RWPE1 (cell line): ENCODE measurements at regions of chr17 and their contacts with region 1.

Region 1: GRCh38 chr17:68924786-68925720 is 30.1 kb downstream of the ABCA8 start:
- DNase-seq: no peak
- H3K27ac ChIP-seq: no peak overlapping the region
- CTCF ChIP-seq: no peak

Region 2: DNA sequence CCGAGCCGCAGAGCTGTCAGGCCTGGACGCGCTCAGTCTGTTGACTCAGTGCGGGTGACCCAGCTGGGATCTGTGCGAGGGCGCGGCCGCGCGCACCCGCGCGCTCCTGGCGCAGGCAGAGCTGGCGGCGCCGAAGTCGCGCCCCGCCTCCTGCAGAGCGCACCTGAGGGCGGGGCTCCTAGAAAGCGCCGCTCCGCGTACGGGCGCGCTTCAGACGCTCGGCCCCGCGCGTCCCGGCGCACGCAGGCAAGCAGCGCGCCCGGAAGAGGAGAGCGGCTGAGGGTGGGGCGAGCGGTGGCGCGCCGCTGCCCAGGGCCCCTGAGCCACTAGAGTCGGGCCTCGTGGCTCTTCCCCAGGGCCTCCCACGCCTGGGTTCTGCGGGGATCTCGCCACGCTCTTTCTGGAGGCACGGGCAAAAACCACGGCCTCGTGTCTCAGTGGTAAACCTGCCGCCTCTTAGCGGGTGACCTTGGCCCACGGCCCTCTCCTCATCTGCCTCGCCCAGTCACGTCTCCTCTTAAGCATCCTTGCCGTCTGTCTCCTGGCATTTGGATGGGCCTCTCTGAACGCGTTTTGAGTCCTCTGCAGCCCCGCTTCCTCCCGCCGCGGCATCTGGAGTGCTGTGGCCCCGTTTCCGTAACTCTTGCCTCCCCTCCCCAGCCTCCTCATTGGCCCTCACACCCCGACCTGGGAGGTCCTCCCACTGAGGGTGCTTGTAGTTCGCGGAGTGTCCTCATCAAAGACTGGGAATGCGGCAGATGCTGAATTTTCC is 402.2 kb after region 1 on chr17 and contains the start of gene ABCA5:
- CTCF ChIA-PET with region 1: interaction called, 10 read pairs
- POLR2A ChIA-PET with region 1: no interaction called
- DNase-seq: peak; percentile 93
- H3K27ac ChIP-seq: peak within 1 kb of the TSS; percentile 88
- CTCF ChIP-seq: no peak

Region 3: DNA sequence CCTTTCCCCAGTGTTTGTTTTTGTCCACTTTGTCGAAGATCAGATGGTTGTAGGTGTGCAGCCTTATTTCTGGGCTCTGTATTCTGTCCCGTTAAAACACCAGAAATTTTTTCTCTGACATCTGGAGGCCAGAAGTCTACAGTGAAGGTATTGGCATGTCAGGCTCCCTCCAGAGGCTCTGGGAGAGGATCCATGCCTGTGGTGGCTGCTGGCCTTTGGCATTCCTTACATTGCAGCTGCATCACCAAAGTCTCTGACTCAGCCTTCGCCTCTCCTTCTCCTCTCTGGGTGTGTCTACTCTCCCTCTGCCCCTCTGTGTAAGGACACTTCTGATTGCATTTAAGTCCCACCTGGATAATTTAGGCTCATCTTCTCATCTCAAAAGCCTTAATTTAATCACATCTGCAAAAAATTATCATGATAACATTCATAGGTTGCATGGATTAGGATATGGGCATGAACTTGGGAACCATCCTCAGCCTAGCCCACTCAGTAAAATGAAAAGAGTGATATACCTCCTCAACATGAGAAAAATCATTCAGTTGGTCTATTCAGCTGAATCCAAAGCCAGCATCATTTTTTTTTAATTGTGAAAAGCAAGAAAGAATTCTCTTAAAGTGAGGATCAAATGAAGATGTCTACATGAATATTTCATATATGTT is 567.5 kb after region 1 on chr17:
- CTCF ChIA-PET with region 1: no interaction called
- POLR2A ChIA-PET with region 1: no interaction called
- DNase-seq: peak; percentile 59
- H3K27ac ChIP-seq: peak overlapping the region; percentile 60
- CTCF ChIP-seq: no peak